ENCODE measurements at regions of chr5 and their contacts with region 1.

Region 1: DNA sequence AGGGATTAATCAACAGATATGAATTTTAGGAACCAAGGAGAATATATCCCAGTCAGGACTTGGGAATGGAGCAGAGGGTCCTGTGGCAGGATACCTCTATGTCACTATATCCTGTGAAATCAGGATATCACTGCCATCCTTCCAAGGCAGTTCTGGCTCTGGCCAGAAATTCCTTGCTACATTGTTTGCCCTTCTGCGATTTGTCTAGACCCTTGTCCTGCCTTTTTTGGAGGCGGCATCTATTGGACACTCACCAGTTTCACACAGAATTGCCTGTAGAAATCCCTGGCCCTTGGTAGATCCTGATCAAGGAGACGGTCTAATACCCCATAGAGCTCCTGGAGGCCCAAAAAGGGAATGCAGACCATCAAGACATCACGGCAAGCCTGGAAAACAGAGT is 71.2 kb downstream of the MROH2B start:
- DNase-seq: no peak
- H3K4me3 ChIP-seq: no peak overlapping the region
- H3K27ac ChIP-seq: no peak overlapping the region
- H3K4me1 ChIP-seq: no peaks in the 10 kb centered on the region
- H3K27me3 ChIP-seq: no peaks in the 10 kb centered on the region
- CTCF ChIP-seq: no peak
- EP300 ChIP-seq: no peak
- POLR2A ChIP-seq: no peak

Region 2: DNA sequence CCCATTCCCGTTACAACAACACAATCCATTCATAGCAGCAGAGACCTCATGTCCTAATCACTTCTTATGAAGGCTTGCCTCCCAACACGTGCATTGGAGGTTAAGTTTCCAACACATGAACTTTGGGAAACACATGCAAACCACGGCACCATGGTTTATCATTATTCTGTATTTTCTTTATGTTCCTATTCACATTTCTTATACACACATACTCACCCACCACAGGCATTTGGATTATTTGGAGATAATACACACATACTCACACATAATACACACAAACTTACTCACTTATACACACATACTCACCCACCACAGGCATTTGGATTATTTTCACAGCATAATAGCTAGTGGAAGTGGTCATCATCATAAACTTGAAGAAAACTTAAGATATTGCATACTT is 15.1 kb before region 1 on chr5:
- in situ Hi-C with region 1: no loop called
- intact Hi-C with region 1: no loop called
- DNase-seq: no peak
- H3K4me3 ChIP-seq: no peak overlapping the region
- H3K27ac ChIP-seq: no peak overlapping the region
- H3K4me1 ChIP-seq: no peaks in the 10 kb centered on the region
- H3K27me3 ChIP-seq: no peaks in the 10 kb centered on the region
- CTCF ChIP-seq: no peak
- EP300 ChIP-seq: no peak
- POLR2A ChIP-seq: no peak

Region 3: GRCh38 chr5:42005561-42006153 is 1005.7 kb after region 1 on chr5:
- in situ Hi-C with region 1: no loop called
- intact Hi-C with region 1: loop called (anchors 5 kb)
- DNase-seq: no peak
- H3K4me3 ChIP-seq: no peak overlapping the region
- H3K27ac ChIP-seq: no peak overlapping the region
- H3K4me1 ChIP-seq: no peaks in the 10 kb centered on the region
- H3K27me3 ChIP-seq: no peaks in the 10 kb centered on the region
- CTCF ChIP-seq: peak; percentile 45 to 73 (median 63)
- EP300 ChIP-seq: no peak
- POLR2A ChIP-seq: no peak